ENCODE measurements at regions of chr13 and their contacts with region 1.

Region 1: DNA sequence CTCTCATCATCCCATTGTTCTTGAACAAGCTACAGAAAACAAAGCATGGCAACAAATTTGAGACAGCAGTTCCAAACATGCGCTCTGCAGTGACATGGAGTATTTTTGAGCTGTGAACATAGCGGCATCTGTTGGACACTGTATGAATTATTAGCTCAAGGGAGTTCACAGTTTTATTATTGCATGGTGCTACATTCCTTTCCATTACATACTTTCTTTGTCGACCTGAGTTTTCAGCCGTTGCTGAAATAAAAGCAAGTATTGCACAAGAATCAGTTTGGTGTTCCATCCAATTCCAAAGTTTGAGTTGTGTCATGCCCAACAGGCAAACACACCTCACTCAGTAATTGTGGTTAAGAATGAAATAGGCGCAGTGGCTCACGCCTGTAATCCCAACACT is 30.1 kb upstream of the METTL21C start:
- DNase-seq: peak; percentile 6
- ATAC-seq: no peak
- H3K4me3 Mint-ChIP-seq: no peak overlapping the region
- H3K27ac Mint-ChIP-seq: no peak overlapping the region
- H3K4me1 Mint-ChIP-seq: peaks cover 4% of the 10 kb centered on the region
- H3K27me3 Mint-ChIP-seq: peaks cover 11% of the 10 kb centered on the region

Region 2: GRCh38 chr13:102580552-102581169 is 144.3 kb before region 1 on chr13:
- CTCF ChIA-PET with region 1: interaction called, 7 read pairs
- POLR2A ChIA-PET with region 1: no interaction called
- intact Hi-C with region 1: loop called (anchors 2 kb)
- DNase-seq: peak; percentile 35
- ATAC-seq: peak; percentile 78
- H3K4me3 Mint-ChIP-seq: no peak overlapping the region
- H3K27ac Mint-ChIP-seq: no peak overlapping the region
- H3K4me1 Mint-ChIP-seq: peaks cover 7% of the 10 kb centered on the region
- H3K27me3 Mint-ChIP-seq: peaks cover 7% of the 10 kb centered on the region

Measured in activated CD4-positive, alpha-beta T cell treated with anti-CD3 and anti-CD28 coated beads for 36 hours (primary cell).